Cardiac septum (tissue), 1 donor: ENCODE measurements at regions of chr9 and their contacts with region 1.

Region 1: GRCh38 chr9:130172161-130172857 is at the start of gene NCS1:
- DNase-seq: peak; percentile 86
- total RNA-seq, gene NCS1: 14.3 TPM

Region 2: GRCh38 chr9:130138171-130138653 is 34.1 kb before region 1 on chr9:
- intact Hi-C with region 1: loop called (anchors 5 kb)
- DNase-seq: peak; percentile 87